ENCODE measurements at regions of chr1 and their contacts with region 1.

Region 1: DNA sequence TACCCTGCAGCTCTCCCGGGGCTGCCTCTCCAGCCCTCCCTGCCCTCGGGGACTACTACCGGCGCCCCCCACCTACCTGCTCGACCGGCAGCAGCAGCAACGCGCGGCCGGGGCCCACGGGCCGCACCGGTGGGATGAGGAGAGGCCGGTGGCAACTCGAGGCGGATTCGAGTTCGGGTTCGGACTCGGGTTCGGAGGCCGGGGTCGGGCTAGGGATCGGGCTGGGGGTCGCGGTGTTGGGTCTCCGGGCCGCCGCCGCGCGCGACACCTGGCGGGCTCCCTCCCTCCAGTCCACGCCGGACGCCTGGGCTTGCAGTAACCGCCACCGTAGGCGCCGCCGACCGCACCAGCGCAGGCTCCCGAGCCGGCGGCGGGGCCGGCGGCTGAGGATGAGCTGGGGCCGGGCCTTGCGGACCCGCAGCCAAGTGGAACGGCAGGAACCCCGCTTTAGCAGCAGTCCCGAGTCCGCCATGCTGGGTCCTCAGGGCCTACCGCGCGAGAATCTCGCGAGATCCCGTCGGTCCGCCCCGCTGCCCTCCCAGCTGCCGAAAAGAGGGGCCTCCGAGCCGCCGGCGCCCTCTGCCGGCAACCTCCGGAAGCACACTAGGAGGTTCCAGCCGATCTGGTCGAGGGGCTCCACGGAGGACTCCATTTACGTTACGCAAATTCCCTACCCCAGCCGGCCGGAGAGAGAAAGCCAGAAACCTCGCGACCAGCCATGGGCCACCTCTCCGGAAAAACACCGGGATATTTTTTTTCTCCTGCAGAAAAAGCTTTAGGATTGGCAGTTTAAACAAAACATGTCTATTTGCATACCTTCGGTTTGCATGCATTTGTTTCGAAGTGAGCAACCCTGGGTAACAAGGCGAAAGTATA is at the start of gene NOL9:
- DNase-seq: peak; percentile 90 to 97 (median 93)
- ATAC-seq: peak; percentile 100
- H3K4me3 ChIP-seq: peak within 1 kb of the TSS; percentile 79
- H3K4me3 Mint-ChIP-seq: peak within 1 kb of the TSS; percentile 77 to 85 (median 80)
- H3K27ac ChIP-seq: peak within 1 kb of the TSS; percentile 83
- H3K27ac Mint-ChIP-seq: peak within 1 kb of the TSS in 8 of 9 donors; percentile 60 to 85 (median 75)
- H3K4me1 ChIP-seq: peaks cover 8 to 20% of the 10 kb centered on the region in 2 donors
- H3K4me1 Mint-ChIP-seq: peaks cover 0 to 25% (median 17%) of the 10 kb centered on the region in 7 donors
- H3K27me3 ChIP-seq: no peaks in the 10 kb centered on the region
- H3K27me3 Mint-ChIP-seq: no peaks in the 10 kb centered on the region
- total RNA-seq, gene NOL9: 54.2 to 80.6 (median 73.8) TPM

Region 2: DNA sequence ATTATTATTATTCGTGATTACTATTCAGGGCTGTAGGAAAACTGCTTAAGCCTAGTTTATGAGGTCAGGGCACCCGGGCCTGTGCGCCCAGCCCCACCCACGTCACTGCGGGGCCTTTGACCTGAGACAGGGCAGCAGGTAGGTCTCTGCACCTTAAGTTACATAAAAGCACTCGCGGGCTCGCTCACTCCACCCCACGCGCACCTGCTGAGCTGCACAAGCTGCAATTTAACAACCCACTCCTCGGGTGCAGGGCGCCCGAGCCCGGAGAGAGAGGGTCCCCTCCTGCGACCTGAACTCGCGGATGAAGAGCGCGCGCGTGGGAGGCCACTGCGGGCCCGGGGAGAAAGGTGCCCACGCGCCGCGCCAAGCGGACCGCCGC is 319.0 kb before region 1 on chr1:
- CTCF ChIA-PET with region 1: no interaction called
- POLR2A ChIA-PET with region 1: no interaction called
- intact Hi-C with region 1: loop called in 1 of 2 experiments (anchors 2 kb)
- DNase-seq: no peak
- ATAC-seq: peak; percentile 3
- H3K4me3 ChIP-seq: peak overlapping the region; percentile 43
- H3K4me3 Mint-ChIP-seq: peak overlapping the region; percentile 79 to 90 (median 87)
- H3K27ac ChIP-seq: peak overlapping the region; percentile 66
- H3K27ac Mint-ChIP-seq: peak overlapping the region in 6 of 9 donors; percentile 28 to 78 (median 47)
- H3K4me1 ChIP-seq: peaks cover 0 to 12% of the 10 kb centered on the region in 2 donors
- H3K4me1 Mint-ChIP-seq: peaks cover 0 to 28% (median 18%) of the 10 kb centered on the region in 7 donors
- H3K27me3 ChIP-seq: no peaks in the 10 kb centered on the region
- H3K27me3 Mint-ChIP-seq: peaks cover 11 to 15% (median 12%) of the 10 kb centered on the region in 5 donors

Region 3: GRCh38 chr1:6489799-6490180 is 64.5 kb before region 1 on chr1:
- CTCF ChIA-PET with region 1: interaction called, 32 read pairs
- POLR2A ChIA-PET with region 1: interaction called, 22 read pairs
- intact Hi-C with region 1: loop called (anchors 1 kb)
- DNase-seq: peak; percentile 66 to 87 (median 77)
- ATAC-seq: peak; percentile 77
- H3K4me3 ChIP-seq: peak overlapping the region; percentile 80
- H3K4me3 Mint-ChIP-seq: peak overlapping the region; percentile 63 to 87 (median 81)
- H3K27ac ChIP-seq: peak overlapping the region; percentile 71
- H3K27ac Mint-ChIP-seq: peak overlapping the region in 1 of 9 donors; percentile 79
- H3K4me1 ChIP-seq: peaks cover 13 to 18% of the 10 kb centered on the region in 2 donors
- H3K4me1 Mint-ChIP-seq: peaks cover 20 to 37% (median 31%) of the 10 kb centered on the region in 7 donors
- H3K27me3 ChIP-seq: peaks cover 0 to 6% of the 10 kb centered on the region in 2 donors
- H3K27me3 Mint-ChIP-seq: peaks cover 6 to 24% (median 9%) of the 10 kb centered on the region in 5 donors

Region 4: DNA sequence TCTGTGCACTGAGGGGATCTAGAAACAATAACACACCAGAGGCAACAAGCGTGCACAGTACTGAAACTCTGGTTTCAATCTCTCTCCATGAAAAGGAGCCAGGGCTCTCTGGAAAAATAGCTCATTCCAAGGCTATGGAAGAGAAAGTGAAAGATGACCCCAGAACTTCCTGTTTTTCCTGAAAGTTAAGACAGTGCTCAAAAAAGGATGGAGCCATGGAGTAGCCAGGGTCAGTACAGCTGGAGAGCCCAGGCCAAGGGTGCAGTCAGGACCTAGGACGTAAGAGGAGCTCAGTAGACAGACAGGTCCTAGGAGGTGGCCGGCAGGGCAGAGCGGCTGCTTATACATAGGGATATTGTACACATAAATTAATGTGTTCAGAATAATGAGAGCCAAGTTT is 19.1 kb before region 1 on chr1:
- CTCF ChIA-PET with region 1: interaction called, 7 read pairs
- POLR2A ChIA-PET with region 1: interaction called, 20 read pairs
- intact Hi-C with region 1: no loop called
- DNase-seq: no peak
- ATAC-seq: no peak
- H3K4me3 ChIP-seq: no peak overlapping the region
- H3K4me3 Mint-ChIP-seq: no peak overlapping the region
- H3K27ac ChIP-seq: no peak overlapping the region
- H3K27ac Mint-ChIP-seq: peak overlapping the region in 4 of 9 donors; percentile 49 to 68 (median 60)
- H3K4me1 ChIP-seq: no peaks in the 10 kb centered on the region
- H3K4me1 Mint-ChIP-seq: peaks cover 0 to 24% (median 5%) of the 10 kb centered on the region in 7 donors
- H3K27me3 ChIP-seq: no peaks in the 10 kb centered on the region
- H3K27me3 Mint-ChIP-seq: no peaks in the 10 kb centered on the region

Region 5: GRCh38 chr1:6613361-6614018 is 59.2 kb after region 1 on chr1 and contains the start of gene PHF13:
- CTCF ChIA-PET with region 1: no interaction called
- POLR2A ChIA-PET with region 1: interaction called, 7 read pairs
- intact Hi-C with region 1: loop called (anchors 1 kb)
- DNase-seq: peak; percentile 97 to 99 (median 98)
- ATAC-seq: peak; percentile 98
- H3K4me3 ChIP-seq: peak within 1 kb of the TSS; percentile 53
- H3K4me3 Mint-ChIP-seq: peak within 1 kb of the TSS; percentile 88 to 97 (median 93)
- H3K27ac ChIP-seq: peak within 1 kb of the TSS; percentile 82
- H3K27ac Mint-ChIP-seq: peak within 1 kb of the TSS; percentile 69 to 95 (median 88)
- H3K4me1 ChIP-seq: peaks cover 0 to 14% of the 10 kb centered on the region in 2 donors
- H3K4me1 Mint-ChIP-seq: peaks cover 16 to 37% (median 25%) of the 10 kb centered on the region in 7 donors
- H3K27me3 ChIP-seq: no peaks in the 10 kb centered on the region
- H3K27me3 Mint-ChIP-seq: peaks cover 0 to 2% (median 0%) of the 10 kb centered on the region in 5 donors
- total RNA-seq, gene PHF13: 7.7 to 14.3 (median 12.2) TPM

Region 6: GRCh38 chr1:6646499-6647148 is 92.4 kb after region 1 on chr1:
- CTCF ChIA-PET with region 1: interaction called, 13 read pairs
- POLR2A ChIA-PET with region 1: no interaction called
- intact Hi-C with region 1: loop called (anchors 1 kb)
- DNase-seq: peak in 7 of 9 donors; percentile 33 to 64 (median 54)
- ATAC-seq: peak; percentile 70
- H3K4me3 ChIP-seq: no peak overlapping the region
- H3K4me3 Mint-ChIP-seq: no peak overlapping the region
- H3K27ac ChIP-seq: no peak overlapping the region
- H3K27ac Mint-ChIP-seq: no peak overlapping the region
- H3K4me1 ChIP-seq: no peaks in the 10 kb centered on the region
- H3K4me1 Mint-ChIP-seq: peaks cover 0 to 6% (median 0%) of the 10 kb centered on the region in 7 donors
- H3K27me3 ChIP-seq: no peaks in the 10 kb centered on the region
- H3K27me3 Mint-ChIP-seq: no peaks in the 10 kb centered on the region